ENCODE measurements at regions of chr19 and their contacts with region 1.

Region 1: GRCh38 chr19:45643024-45643926 is 4.1 kb upstream of the EML2 start:
- DNase-seq: peak; percentile 84 to 86 (median 86)
- ATAC-seq: peak; percentile 58 to 65 (median 64)
- H3K4me3 ChIP-seq: peak overlapping the region in 1 of 3 donors; percentile 12
- H3K27ac ChIP-seq: peak overlapping the region in 1 of 3 donors; percentile 55
- H3K4me1 ChIP-seq: peaks cover 0 to 27% (median 15%) of the 10 kb centered on the region in 4 donors
- H3K27me3 ChIP-seq: peaks cover 0 to 4% of the 10 kb centered on the region in 2 donors
- CTCF ChIP-seq: peak; percentile 95 to 98 (median 96)
- POLR2A ChIP-seq: no peak

Region 2: GRCh38 chr19:45523642-45524256 is 119.5 kb before region 1 on chr19:
- intact Hi-C with region 1: loop called (anchors 10 kb)
- DNase-seq: peak; percentile 55 to 80 (median 77)
- ATAC-seq: peak; percentile 90 to 96 (median 93)
- H3K4me3 ChIP-seq: no peak overlapping the region
- H3K27ac ChIP-seq: no peak overlapping the region
- H3K4me1 ChIP-seq: peaks cover 0 to 26% (median 0%) of the 10 kb centered on the region in 4 donors
- H3K27me3 ChIP-seq: no peaks in the 10 kb centered on the region
- CTCF ChIP-seq: peak; percentile 83 to 92 (median 89)
- POLR2A ChIP-seq: no peak

Region 3: DNA sequence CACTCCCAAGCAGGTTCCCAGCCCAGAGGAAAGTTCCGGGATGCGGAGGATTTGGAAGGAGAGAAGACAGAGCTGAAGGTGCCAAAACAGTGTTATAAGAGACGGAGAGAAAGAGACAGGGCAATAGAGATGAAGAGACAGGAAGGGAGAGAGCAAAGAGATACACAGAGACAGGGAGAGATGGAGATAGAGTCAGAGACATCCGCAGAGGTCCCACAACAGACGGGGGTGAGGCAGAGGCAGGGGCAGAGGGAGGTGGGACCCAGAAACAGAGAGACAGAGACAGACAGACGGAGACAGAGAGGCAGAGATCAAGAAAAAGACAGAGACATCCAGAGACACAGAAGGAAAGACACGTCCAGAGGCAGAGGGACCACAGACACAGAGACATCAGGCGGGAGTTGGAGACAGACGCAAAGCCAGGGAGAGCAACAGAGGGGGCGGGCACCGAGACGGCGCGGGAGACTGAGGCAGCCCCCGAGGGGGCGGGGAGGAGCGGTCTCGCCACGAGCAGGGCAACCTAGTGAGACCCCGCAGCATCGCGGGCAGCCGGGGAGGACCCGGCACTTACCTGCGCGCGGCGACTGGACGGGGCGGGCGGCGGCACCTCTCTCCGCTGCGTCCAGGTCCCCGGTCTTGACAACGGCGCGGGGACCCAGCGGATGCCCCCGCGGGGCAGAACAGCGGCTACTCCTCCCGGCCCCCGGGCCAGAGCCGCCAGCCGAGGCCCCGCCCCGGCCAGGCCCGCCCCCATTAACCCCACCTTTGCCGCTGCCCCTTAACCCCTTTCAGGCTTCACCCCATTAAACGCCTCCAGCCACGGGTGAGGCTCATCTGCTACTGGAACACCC is 41.5 kb before region 1 on chr19 and contains the start of gene GPR4:
- intact Hi-C with region 1: loop called (anchors 5 kb)
- DNase-seq: peak in 1 of 3 donors; percentile 40
- ATAC-seq: peak; percentile 61 to 74 (median 64)
- H3K4me3 ChIP-seq: peak within 1 kb of the TSS; percentile 27 to 45 (median 33)
- H3K27ac ChIP-seq: peak within 1 kb of the TSS in 2 of 3 donors; percentile 16 to 70
- H3K4me1 ChIP-seq: peaks cover 0 to 2% (median 0%) of the 10 kb centered on the region in 4 donors
- H3K27me3 ChIP-seq: no peaks in the 10 kb centered on the region
- CTCF ChIP-seq: no peak
- POLR2A ChIP-seq: peak; percentile 35
- total RNA-seq, gene GPR4: 0.83 to 3.1 (median 1.3) TPM

Region 4: GRCh38 chr19:45607071-45608029 is 35.9 kb before region 1 on chr19:
- intact Hi-C with region 1: loop called (anchors 5 kb)
- DNase-seq: peak; percentile 73 to 77 (median 77)
- ATAC-seq: peak; percentile 89 to 97 (median 92)
- H3K4me3 ChIP-seq: no peak overlapping the region
- H3K27ac ChIP-seq: no peak overlapping the region
- H3K4me1 ChIP-seq: peaks cover 0 to 10% (median 0%) of the 10 kb centered on the region in 4 donors
- H3K27me3 ChIP-seq: no peaks in the 10 kb centered on the region
- CTCF ChIP-seq: peak; percentile 79 to 87 (median 86)
- POLR2A ChIP-seq: no peak